Adrenal gland (tissue), 19 donors: ENCODE measurements at regions of chr12 and their contacts with region 1.

Region 1: GRCh38 chr12:31644536-31644935 is 15.0 kb upstream of the ETFBKMT start:
- DNase-seq: no peak
- H3K4me3 ChIP-seq: no peak overlapping the region
- H3K27ac ChIP-seq: no peak overlapping the region
- H3K4me1 ChIP-seq: peaks cover 0 to 4% of the 10 kb centered on the region in 2 donors
- H3K27me3 ChIP-seq: no peaks in the 10 kb centered on the region
- CTCF ChIP-seq: no peak
- POLR2A ChIP-seq: no peak

Region 2: DNA sequence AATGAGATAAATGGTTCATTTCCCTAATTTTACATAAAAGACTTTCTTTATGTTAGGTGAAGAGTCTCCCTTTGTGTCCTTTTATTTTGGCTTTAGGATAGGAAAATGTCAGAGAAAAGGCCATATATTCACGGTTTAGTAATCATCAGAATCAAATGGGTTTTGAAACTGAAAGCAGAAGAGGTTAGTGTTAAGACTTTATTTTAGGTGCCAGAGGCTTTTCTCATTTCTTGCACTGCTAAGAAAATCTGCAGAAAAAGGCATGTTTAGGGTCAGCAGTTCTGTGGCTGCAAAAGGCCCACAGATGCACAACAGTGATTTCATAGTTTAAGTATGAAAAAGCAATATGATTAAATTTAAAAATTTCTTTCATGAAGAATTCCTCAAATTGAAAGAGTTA is 238.2 kb before region 1 on chr12:
- intact Hi-C with region 1: loop called (anchors 2 to 5 kb)
- DNase-seq: no peak
- H3K4me3 ChIP-seq: no peak overlapping the region
- H3K27ac ChIP-seq: no peak overlapping the region
- H3K4me1 ChIP-seq: peaks cover 0 to 3% of the 10 kb centered on the region in 2 donors
- H3K27me3 ChIP-seq: no peaks in the 10 kb centered on the region
- CTCF ChIP-seq: no peak
- POLR2A ChIP-seq: no peak